Esophagus squamous epithelium (tissue), 5 donors: ENCODE measurements at regions of chr1 and their contacts with region 1.

Region 1: GRCh38 chr1:165367375-165367993 is 11.0 kb upstream of the LMX1A start:
- DNase-seq: no peak
- H3K4me3 ChIP-seq: no peak overlapping the region
- H3K27ac ChIP-seq: no peak overlapping the region
- H3K4me1 ChIP-seq: peaks cover 0 to 16% (median 11%) of the 10 kb centered on the region in 3 donors
- H3K27me3 ChIP-seq: peaks cover 0 to 60% (median 0%) of the 10 kb centered on the region in 4 donors
- CTCF ChIP-seq: peak; percentile 77 to 97 (median 88)
- POLR2A ChIP-seq: no peak

Region 2: DNA sequence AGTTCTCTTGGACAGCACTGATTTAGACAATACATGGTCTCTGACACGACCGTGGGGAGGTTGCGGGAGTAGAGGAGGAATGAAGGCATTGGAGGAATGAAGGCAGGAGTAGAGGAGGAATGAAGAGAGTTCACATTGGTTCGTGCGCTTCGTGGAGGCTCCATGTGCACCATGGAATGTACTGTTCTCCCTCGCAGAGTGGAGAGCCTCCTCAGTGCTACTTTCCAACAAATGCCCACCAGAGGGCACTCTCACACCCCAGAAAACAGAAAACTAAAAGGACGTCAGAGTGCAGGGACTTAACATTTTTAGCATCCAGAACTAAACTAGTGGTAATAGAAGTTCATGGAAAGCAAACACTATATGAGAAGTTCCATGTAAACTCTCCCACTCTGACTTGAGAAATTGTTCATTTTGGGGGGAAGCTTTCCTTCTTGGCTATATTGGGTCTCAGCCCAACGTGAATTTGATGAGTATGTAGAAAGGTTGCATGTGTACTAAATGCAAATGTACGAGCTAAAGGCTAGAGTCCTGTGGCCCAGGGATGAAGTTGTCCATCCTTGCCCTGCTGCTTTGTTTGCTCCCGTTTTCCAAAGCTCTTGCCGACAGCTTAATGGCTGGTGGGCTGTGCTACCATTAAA is 222.6 kb before region 1 on chr1:
- intact Hi-C with region 1: loop called (anchors 5 kb)
- DNase-seq: no peak
- H3K4me3 ChIP-seq: no peak overlapping the region
- H3K27ac ChIP-seq: no peak overlapping the region
- H3K4me1 ChIP-seq: no peaks in the 10 kb centered on the region
- H3K27me3 ChIP-seq: peaks cover 0 to 60% (median 0%) of the 10 kb centered on the region in 4 donors
- CTCF ChIP-seq: peak in 5 of 6 experiments; percentile 51 to 78 (median 64)
- POLR2A ChIP-seq: no peak

Region 3: GRCh38 chr1:165257969-165258459 is 109.5 kb before region 1 on chr1:
- intact Hi-C with region 1: loop called (anchors 5 kb)
- DNase-seq: no peak
- H3K4me3 ChIP-seq: no peak overlapping the region
- H3K27ac ChIP-seq: no peak overlapping the region
- H3K4me1 ChIP-seq: peaks cover 0 to 4% (median 0%) of the 10 kb centered on the region in 3 donors
- H3K27me3 ChIP-seq: peaks cover 0 to 26% (median 0%) of the 10 kb centered on the region in 4 donors
- CTCF ChIP-seq: peak; percentile 19 to 82 (median 70)
- POLR2A ChIP-seq: no peak

Region 4: GRCh38 chr1:165481820-165482532 is 114.5 kb after region 1 on chr1:
- intact Hi-C with region 1: no loop called
- DNase-seq: no peak
- H3K4me3 ChIP-seq: no peak overlapping the region
- H3K27ac ChIP-seq: no peak overlapping the region
- H3K4me1 ChIP-seq: no peaks in the 10 kb centered on the region
- H3K27me3 ChIP-seq: peaks cover 0 to 27% (median 0%) of the 10 kb centered on the region in 4 donors
- CTCF ChIP-seq: no peak
- POLR2A ChIP-seq: no peak